Mammary epithelial cell (primary cell): ENCODE measurements at regions of chr12 and their contacts with region 1.

Region 1: DNA sequence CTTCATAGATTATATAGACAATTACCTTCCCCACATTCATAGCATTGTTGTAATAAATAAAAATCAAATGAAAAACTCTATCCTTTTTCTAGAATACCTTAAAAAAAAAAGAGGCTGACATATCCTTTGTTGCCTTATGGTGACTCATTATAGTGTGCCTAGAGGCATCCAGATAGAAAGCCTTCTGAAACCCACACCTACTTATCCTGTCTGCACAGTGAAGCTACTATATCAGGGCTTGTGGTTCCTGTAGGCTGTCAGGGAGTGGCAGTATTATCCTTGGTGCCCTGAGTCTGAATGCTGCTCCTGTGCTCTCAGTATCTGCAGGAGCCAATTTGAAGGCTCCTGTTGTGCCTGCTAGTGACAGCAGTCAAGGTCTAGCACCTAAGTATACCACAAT is 168.3 kb upstream of the AVPR1A start:
- DNase-seq: peak; percentile 94
- H3K4me3 ChIP-seq: no peak overlapping the region
- H3K27ac ChIP-seq: peak overlapping the region; percentile 94
- H3K4me1 ChIP-seq: peaks cover 37% of the 10 kb centered on the region
- H3K27me3 ChIP-seq: no peaks in the 10 kb centered on the region
- CTCF ChIP-seq: peak; percentile 46 to 55

Region 2: GRCh38 chr12:63292476-63293221 is 26.7 kb before region 1 on chr12:
- CTCF ChIA-PET with region 1: no interaction called
- dilution Hi-C with region 1: no loop called
- in situ Hi-C with region 1: no loop called
- intact Hi-C with region 1: loop called (anchors 1 kb)
- DNase-seq: no peak
- H3K4me3 ChIP-seq: no peak overlapping the region
- H3K27ac ChIP-seq: no peak overlapping the region
- H3K4me1 ChIP-seq: peaks cover 18% of the 10 kb centered on the region
- H3K27me3 ChIP-seq: no peaks in the 10 kb centered on the region
- CTCF ChIP-seq: no peak

Region 3: GRCh38 chr12:63668028-63668799 is 348.9 kb after region 1 on chr12 and contains the start of gene DPY19L2:
- CTCF ChIA-PET with region 1: no interaction called
- dilution Hi-C with region 1: no loop called
- in situ Hi-C with region 1: no loop called
- intact Hi-C with region 1: loop called (anchors 2 kb)
- DNase-seq: peak; percentile 33
- H3K4me3 ChIP-seq: peak within 1 kb of the TSS; percentile 41 to 51 (median 43)
- H3K27ac ChIP-seq: no peak within 1 kb of the TSS
- H3K4me1 ChIP-seq: peaks cover 10% of the 10 kb centered on the region
- H3K27me3 ChIP-seq: peaks cover 12% of the 10 kb centered on the region
- CTCF ChIP-seq: no peak
- total RNA-seq, gene DPY19L2: 0.92 to 1.3 TPM